Cardiac septum (tissue), 1 donor: ENCODE measurements at regions of chr2 and their contacts with region 1.

Region 1: DNA sequence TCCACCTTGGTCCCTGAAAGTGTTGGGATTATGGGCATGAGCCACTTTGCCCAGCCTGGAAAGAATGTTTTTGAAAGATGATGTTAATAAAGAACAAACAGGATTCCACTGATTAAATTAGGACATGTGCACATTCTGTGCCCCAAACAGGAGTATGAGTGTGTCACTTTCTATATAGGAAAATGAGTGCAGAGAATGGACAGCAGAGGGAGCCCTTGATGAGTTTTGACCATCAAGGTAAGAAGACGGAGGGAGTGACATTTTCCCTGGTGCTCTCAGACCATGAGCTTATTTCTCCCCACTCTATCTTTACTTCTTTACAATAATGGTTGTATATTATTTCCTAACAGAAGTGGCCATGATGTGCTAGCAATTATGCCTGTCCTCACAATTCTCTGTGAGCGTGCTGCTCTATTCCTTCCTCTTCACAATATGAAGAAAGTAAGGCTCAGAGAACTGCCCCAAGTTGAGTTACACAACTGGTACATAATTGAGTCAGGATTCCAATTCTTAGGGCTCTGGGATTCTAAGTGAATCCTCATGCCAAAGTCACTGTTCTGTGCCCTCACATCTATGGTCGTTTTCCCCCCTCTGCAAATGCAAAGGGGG is 20.6 kb downstream of the RPL37A start:
- DNase-seq: no peak

Region 2: DNA sequence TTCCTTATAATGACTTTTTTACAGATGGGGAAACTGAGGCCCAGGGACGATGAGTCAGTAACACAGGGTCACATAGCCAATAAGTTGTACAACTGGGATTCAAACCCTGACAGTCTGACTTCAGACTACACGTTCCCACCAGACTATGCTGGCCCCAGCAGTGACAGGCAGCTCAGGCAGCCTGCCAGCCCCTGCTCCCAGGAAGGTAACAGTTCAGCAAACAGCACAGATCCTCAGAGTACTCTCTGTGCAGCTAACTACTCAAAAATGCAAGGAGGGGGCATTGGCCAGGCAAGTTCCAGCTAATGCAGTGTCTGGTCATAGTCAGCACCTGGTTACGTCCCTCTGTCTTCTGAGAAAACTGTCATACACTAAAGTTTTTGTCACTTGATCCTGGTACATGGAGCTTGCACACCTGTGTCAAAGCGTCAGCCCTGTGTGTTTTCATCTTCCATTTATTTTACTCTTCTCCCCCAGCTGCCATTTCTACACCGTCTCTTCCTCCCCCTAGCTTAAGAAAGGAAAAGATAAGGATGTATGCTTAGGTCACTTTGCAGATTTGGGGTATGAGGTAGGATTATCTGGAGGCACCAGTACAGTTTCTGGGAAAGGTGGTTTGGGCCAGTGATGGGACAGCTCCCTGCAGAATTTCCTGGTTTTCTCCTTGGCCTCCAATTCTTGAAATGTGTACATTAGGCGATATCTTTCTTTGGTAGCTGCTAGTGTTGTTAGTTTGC is 102.5 kb before region 1 on chr2:
- intact Hi-C with region 1: no loop called
- DNase-seq: no peak

Region 3: GRCh38 chr2:216666461-216667233 is 147.4 kb after region 1 on chr2:
- intact Hi-C with region 1: loop called (anchors 1 kb)
- DNase-seq: peak; percentile 83

Region 4: GRCh38 chr2:217713395-217714286 is 1194.4 kb after region 1 on chr2:
- intact Hi-C with region 1: loop called (anchors 5 kb)
- DNase-seq: peak; percentile 83

Region 5: DNA sequence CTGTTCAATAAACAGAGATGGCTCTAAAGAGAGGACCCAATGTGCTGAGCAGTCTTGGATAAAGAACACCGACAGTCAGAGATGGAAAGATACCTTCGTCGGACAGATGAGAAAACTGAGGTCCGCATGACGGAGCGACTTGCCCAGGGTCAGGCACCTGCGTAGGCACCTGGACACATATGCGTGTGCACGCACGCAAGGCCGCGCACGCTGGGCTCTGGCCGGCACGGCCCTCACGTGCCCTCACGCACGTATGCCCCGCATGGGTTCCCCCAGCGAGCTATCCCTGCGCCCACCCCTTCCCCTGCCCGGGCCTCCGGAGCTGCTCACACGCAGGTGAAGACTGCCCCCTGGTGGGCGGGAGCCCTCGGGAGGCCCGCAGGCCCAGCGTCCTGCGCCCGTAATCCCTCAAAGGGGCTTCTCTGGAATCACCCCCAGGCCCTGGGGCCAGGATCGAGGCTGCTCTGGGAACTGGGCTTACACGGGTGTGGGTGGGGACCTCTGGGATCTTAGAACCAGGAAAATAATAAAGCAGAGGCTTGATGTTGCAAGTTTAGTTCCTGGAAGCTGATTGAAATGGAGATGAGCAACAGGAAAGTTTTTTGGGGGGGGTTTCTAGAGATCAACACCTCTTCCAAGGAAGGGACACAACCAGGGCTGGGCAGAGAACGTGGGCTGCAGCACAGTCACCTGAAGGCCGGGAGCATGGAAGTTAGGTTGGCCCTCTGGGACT is 1237.3 kb after region 1 on chr2:
- intact Hi-C with region 1: loop called (anchors 5 kb)
- DNase-seq: no peak